Naive thymus-derived CD4-positive, alpha-beta T cell (primary cell): ENCODE measurements at regions of chrX and their contacts with region 1.

Region 1: DNA sequence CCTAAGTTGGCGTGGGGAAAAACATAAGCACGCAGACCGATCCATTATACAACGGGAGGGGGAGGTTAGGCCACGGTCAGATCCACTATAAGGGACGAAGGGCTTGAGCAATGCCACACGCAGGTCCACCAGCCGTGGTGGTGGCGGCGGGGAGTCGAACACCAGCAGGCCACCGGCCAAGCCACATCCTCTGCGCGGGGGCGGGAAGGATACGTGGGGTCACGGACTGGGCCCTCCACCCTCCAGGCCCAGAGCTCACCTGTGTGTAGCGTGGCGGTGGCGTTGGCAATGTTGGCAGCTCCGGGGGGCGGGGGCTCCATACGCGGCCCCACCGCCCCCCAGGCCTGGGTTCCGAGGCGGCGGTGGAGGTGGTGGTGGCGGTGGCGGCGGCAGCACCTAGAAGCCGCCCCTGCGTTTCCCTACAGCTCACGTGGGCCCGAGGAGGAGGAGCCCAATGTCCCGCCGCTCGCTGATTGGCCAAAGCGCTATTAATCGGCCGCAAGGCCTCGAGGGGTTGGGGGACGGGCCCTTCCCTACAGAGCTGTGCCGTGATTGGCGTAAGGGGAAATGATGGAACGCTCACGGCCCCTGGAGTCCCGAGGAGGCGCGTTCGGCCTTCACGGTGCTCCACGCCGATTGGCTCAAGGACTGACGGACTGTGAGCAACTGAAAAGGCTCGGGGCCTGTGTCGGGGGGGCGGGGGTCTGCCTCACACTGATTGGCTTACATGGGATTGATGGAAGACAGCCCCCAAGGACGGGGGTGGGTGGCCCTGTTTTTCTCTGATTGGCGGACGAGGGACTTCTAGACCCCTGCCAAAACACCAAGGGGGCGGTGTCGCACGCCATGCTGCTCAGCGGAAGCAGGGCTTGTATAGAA is at the start of gene ELK1:
- DNase-seq: peak; percentile 67 to 92 (median 88)
- ATAC-seq: peak; percentile 95
- H3K4me3 ChIP-seq: peak within 1 kb of the TSS; percentile 70
- H3K4me3 Mint-ChIP-seq: peak within 1 kb of the TSS; percentile 87 to 96 (median 90)
- H3K27ac ChIP-seq: peak within 1 kb of the TSS; percentile 85
- H3K27ac Mint-ChIP-seq: peak within 1 kb of the TSS; percentile 89 to 97 (median 95)
- H3K4me1 ChIP-seq: peaks cover 12 to 16% of the 10 kb centered on the region in 2 donors
- H3K4me1 Mint-ChIP-seq: peaks cover 35 to 52% (median 48%) of the 10 kb centered on the region in 7 donors
- H3K27me3 ChIP-seq: no peaks in the 10 kb centered on the region
- H3K27me3 Mint-ChIP-seq: no peaks in the 10 kb centered on the region
- total RNA-seq, gene ELK1: 29.3 to 62.4 (median 38.1) TPM

Region 2: DNA sequence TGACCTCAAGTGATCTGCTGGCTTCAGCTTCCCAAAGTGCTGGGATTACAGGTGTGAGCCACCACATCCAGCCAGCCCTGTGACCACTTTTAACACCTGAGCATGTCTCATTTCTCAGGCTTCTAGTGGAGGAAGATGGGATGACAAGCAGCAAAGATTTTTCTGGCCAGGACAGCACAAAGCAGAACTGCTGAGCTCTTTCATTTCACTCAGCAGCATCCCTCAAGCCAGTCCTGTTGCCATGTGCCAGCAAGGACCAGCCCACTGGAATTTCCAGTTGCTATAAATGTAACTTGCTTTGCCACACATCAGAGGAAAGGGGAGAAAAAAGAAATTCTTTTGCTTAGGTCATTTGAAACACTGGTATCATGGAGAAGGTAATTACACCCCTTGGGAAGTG is 967.4 kb before region 1 on chrX:
- CTCF ChIA-PET with region 1: no interaction called
- POLR2A ChIA-PET with region 1: no interaction called
- intact Hi-C with region 1: no loop called
- DNase-seq: no peak
- ATAC-seq: no peak
- H3K4me3 ChIP-seq: no peak overlapping the region
- H3K4me3 Mint-ChIP-seq: no peak overlapping the region
- H3K27ac ChIP-seq: no peak overlapping the region
- H3K27ac Mint-ChIP-seq: peak overlapping the region in 1 of 9 donors; percentile 7
- H3K4me1 ChIP-seq: no peaks in the 10 kb centered on the region
- H3K4me1 Mint-ChIP-seq: peaks cover 0 to 15% (median 0%) of the 10 kb centered on the region in 7 donors
- H3K27me3 ChIP-seq: no peaks in the 10 kb centered on the region
- H3K27me3 Mint-ChIP-seq: no peaks in the 10 kb centered on the region

Region 3: DNA sequence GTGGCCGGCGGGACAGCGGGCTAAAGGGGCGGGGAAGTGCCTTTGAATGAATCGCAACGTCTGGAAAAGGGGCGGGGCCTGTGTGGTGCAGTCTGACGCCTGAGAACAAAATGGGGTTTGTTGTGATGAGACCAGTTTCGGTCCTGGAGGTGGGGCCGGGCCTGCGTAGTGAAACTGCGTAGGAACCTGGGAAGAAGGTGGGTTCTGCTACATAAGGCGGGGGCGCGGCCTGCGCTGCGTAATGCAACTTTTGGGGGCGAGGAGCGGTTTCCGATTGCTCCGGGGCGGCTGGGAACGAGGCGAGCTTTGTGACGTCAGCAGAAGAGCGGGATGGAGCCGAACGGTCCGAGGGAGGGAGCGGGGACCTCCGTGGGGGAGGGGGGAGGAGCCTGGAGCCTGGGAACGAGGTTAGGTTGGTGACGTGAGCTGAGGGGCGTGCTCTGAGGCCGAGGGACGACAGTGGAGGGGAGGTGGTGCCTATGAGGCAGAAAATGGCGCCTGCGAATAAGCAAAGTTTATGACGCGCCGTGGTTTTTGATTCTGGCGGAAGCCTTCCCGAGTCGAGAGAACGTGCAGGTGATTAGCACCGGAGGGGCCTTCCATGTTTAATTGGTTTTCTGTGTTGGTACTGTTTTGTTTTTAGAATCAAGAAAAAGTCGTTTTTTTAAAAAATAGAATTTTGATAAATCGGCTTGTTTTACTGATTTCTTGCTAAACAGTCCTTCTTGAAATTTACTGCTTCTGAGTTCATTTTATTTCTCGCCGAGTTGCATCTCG is 416.9 kb before region 1 on chrX:
- CTCF ChIA-PET with region 1: no interaction called
- POLR2A ChIA-PET with region 1: no interaction called
- intact Hi-C with region 1: loop called (anchors 2 to 5 kb)
- DNase-seq: peak; percentile 71 to 97 (median 94)
- ATAC-seq: peak; percentile 92
- H3K4me3 ChIP-seq: peak overlapping the region; percentile 74
- H3K4me3 Mint-ChIP-seq: peak overlapping the region; percentile 84 to 98 (median 90)
- H3K27ac ChIP-seq: peak overlapping the region; percentile 99
- H3K27ac Mint-ChIP-seq: peak overlapping the region; percentile 94 to 100 (median 98)
- H3K4me1 ChIP-seq: peaks cover 0 to 14% of the 10 kb centered on the region in 2 donors
- H3K4me1 Mint-ChIP-seq: peaks cover 8 to 49% (median 24%) of the 10 kb centered on the region in 7 donors
- H3K27me3 ChIP-seq: no peaks in the 10 kb centered on the region
- H3K27me3 Mint-ChIP-seq: peaks cover 0 to 4% (median 0%) of the 10 kb centered on the region in 5 donors

Region 4: DNA sequence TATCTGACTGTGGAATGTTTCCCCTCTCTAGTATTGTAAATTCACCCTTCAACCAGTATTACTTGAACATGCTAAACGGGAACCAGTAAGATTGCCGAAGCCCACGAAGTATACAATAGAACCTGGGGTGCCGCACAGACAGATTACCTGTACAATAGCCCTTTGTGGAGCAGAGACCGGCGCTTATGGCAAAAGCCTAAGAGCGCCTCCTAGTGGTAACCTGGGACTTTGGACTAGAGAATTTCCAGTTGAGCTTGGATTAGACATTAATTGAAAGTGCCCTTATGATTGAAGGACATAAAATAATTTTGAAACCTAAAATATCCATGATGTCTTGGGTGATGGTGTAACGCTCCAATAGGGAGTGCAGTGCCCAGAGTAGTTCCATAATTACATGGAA is 265.9 kb before region 1 on chrX:
- CTCF ChIA-PET with region 1: no interaction called
- POLR2A ChIA-PET with region 1: no interaction called
- intact Hi-C with region 1: loop called in 1 of 2 experiments (anchors 5 kb)
- DNase-seq: peak; percentile 27 to 83 (median 67)
- ATAC-seq: peak; percentile 86
- H3K4me3 ChIP-seq: no peak overlapping the region
- H3K4me3 Mint-ChIP-seq: peak overlapping the region in 3 of 10 donors; percentile 31 to 39 (median 37)
- H3K27ac ChIP-seq: no peak overlapping the region
- H3K27ac Mint-ChIP-seq: peak overlapping the region in 3 of 9 donors; percentile 45 to 73 (median 67)
- H3K4me1 ChIP-seq: peaks cover 4 to 10% of the 10 kb centered on the region in 2 donors
- H3K4me1 Mint-ChIP-seq: peaks cover 11 to 39% (median 31%) of the 10 kb centered on the region in 7 donors
- H3K27me3 ChIP-seq: no peaks in the 10 kb centered on the region
- H3K27me3 Mint-ChIP-seq: no peaks in the 10 kb centered on the region

Region 5: DNA sequence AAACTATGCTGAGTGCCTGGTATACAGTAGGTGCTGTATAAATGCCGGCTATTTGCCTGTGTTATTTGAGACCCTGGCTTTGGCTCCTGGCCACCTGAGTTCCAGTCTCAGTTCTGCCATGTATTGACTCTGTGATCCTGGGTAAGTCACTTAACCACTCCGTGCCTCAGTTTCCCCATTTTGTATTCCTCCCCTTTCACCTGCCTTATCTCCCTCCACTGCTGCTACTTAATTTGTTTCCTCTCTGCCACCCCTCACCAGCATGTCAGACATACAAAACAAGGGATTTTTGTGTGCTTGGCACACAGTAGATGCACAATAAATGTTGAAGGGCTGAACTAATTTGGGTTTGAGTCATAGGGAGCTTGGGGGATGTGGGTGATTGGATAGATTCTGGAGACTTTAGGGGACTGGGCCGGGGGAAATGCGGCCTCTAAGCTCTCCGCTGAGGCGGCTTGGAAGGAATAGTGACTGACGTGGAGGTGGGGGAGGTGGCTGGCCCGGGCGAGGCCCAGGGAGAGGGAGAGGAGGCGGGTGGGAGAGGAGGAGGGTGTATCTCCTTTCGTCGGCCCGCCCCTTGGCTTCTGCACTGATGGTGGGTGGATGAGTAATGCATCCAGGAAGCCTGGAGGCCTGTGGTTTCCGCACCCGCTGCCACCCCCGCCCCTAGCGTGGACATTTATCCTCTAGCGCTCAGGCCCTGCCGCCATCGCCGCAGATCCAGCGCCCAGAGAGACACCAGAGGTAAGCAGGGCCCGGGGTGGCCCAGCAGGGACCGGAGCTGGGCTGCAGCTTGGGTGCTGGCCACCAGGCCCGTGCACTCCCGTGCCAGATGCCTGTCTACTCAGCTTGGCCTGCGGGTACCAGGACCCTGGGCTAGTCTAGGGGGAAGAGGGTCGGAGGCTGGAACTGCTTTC is 68.4 kb before region 1 on chrX and contains the start of gene TIMP1:
- CTCF ChIA-PET with region 1: no interaction called
- POLR2A ChIA-PET with region 1: no interaction called
- intact Hi-C with region 1: loop called in 1 of 2 experiments (anchors 2 kb)
- DNase-seq: peak in 8 of 9 donors; percentile 36 to 80 (median 46)
- ATAC-seq: peak; percentile 93
- H3K4me3 ChIP-seq: peak within 1 kb of the TSS; percentile 52
- H3K4me3 Mint-ChIP-seq: peak within 1 kb of the TSS; percentile 65 to 88 (median 76)
- H3K27ac ChIP-seq: peak within 1 kb of the TSS; percentile 58
- H3K27ac Mint-ChIP-seq: peak within 1 kb of the TSS; percentile 57 to 90 (median 82)
- H3K4me1 ChIP-seq: peaks cover 9 to 17% of the 10 kb centered on the region in 2 donors
- H3K4me1 Mint-ChIP-seq: peaks cover 15 to 40% (median 24%) of the 10 kb centered on the region in 7 donors
- H3K27me3 ChIP-seq: no peaks in the 10 kb centered on the region
- H3K27me3 Mint-ChIP-seq: no peaks in the 10 kb centered on the region
- total RNA-seq, gene TIMP1: 47.0 to 117 (median 85.2) TPM

Region 6: GRCh38 chrX:47628980-47629379 is 21.4 kb before region 1 on chrX:
- CTCF ChIA-PET with region 1: interaction called, 15 read pairs
- POLR2A ChIA-PET with region 1: interaction called, 8 read pairs
- intact Hi-C with region 1: loop called in 1 of 2 experiments (anchors 2 kb)
- DNase-seq: peak in 4 of 9 donors; percentile 14 to 35 (median 30)
- ATAC-seq: peak; percentile 33
- H3K4me3 ChIP-seq: peak overlapping the region; percentile 33
- H3K4me3 Mint-ChIP-seq: peak overlapping the region; percentile 83 to 95 (median 90)
- H3K27ac ChIP-seq: peak overlapping the region; percentile 64
- H3K27ac Mint-ChIP-seq: peak overlapping the region; percentile 72 to 95 (median 89)
- H3K4me1 ChIP-seq: peaks cover 0 to 3% of the 10 kb centered on the region in 2 donors
- H3K4me1 Mint-ChIP-seq: peaks cover 0 to 34% (median 28%) of the 10 kb centered on the region in 7 donors
- H3K27me3 ChIP-seq: no peaks in the 10 kb centered on the region
- H3K27me3 Mint-ChIP-seq: peaks cover 0 to 3% (median 0%) of the 10 kb centered on the region in 5 donors

Region 7: DNA sequence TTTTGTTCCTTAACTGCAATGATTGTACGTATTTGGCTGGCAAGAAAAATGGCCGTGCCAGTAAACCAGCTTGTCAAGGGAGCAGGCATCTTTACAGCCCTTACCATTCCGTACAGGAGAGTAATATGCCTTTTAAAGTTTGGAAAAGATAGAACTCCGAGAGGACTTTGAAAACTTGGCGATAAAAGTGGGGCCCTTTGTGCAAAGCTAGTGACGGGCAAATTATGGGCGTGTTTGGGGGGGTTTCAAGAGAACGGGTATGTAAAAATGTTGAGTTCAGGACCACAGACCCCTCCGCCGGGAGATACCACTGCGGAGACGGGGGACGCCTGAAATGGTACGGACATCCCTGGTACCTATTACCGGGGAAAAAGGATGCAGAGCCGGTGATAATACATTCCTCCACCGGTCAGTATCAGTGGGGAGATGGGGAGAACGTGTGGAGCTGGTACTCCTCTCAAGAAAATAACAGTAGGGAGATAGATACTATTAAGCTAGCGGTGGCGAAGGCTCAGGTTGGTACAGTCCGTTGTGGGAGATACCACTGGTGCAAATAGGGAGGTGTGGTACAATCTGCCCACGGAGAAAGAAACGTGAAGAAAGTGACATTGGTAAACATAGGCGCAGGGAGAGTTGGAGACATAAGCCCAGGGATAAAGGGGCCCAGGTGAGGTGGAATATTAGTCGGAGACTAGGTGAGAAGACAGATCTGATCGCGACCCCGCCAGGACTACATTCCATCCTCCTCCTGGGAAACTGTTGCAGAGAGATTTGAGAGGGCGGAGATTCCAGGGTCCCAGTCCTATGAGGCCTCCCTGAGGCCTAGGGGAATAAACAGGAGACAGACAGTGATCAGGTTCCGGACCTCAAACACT is 370.9 kb after region 1 on chrX:
- CTCF ChIA-PET with region 1: no interaction called
- POLR2A ChIA-PET with region 1: interaction called, 7 read pairs
- intact Hi-C with region 1: loop called (anchors 2 kb)
- DNase-seq: peak; percentile 57 to 90 (median 87)
- ATAC-seq: peak; percentile 77
- H3K4me3 ChIP-seq: peak overlapping the region; percentile 96
- H3K4me3 Mint-ChIP-seq: peak overlapping the region; percentile 91 to 97 (median 94)
- H3K27ac ChIP-seq: peak overlapping the region; percentile 87
- H3K27ac Mint-ChIP-seq: peak overlapping the region; percentile 93 to 99 (median 98)
- H3K4me1 ChIP-seq: no peaks in the 10 kb centered on the region
- H3K4me1 Mint-ChIP-seq: peaks cover 6 to 29% (median 10%) of the 10 kb centered on the region in 7 donors
- H3K27me3 ChIP-seq: no peaks in the 10 kb centered on the region
- H3K27me3 Mint-ChIP-seq: peaks cover 0 to 6% (median 0%) of the 10 kb centered on the region in 5 donors

Region 8: DNA sequence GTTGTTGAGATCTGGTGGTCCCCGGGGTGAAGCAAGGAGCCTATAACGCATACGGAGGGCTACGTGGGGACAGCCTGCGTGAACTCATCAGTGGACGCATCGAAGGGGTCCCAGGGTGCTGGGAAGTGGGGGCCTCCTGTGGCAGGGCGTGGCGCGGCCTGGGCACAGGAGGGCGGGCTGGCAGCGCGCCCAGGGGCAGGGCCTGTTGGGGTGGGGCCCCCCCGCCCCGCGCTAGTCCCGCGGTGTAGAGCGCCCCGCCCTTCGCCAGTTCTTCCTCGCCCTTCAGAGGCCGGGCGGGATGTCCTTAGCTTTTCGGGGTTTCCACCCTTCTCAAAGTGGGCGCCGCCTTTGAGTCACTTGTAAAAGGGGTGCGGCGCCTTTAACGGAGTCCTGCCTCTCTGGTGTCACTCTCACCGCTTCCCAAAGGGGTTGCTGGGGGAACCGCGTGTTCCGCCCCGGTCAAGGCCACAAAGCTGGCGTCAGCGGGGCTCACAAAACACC is 1521.9 kb after region 1 on chrX:
- CTCF ChIA-PET with region 1: no interaction called
- POLR2A ChIA-PET with region 1: no interaction called
- intact Hi-C with region 1: loop called in 1 of 2 experiments (anchors 10 kb)
- DNase-seq: peak in 8 of 9 donors; percentile 26 to 70 (median 33)
- ATAC-seq: peak; percentile 79
- H3K4me3 ChIP-seq: peak overlapping the region; percentile 63
- H3K4me3 Mint-ChIP-seq: peak overlapping the region; percentile 78 to 92 (median 87)
- H3K27ac ChIP-seq: peak overlapping the region; percentile 62
- H3K27ac Mint-ChIP-seq: peak overlapping the region; percentile 2 to 85 (median 82)
- H3K4me1 ChIP-seq: peaks cover 6 to 14% of the 10 kb centered on the region in 2 donors
- H3K4me1 Mint-ChIP-seq: peaks cover 9 to 36% (median 26%) of the 10 kb centered on the region in 7 donors
- H3K27me3 ChIP-seq: no peaks in the 10 kb centered on the region
- H3K27me3 Mint-ChIP-seq: no peaks in the 10 kb centered on the region

Region 9: GRCh38 chrX:49644991-49645637 is 1994.7 kb after region 1 on chrX:
- CTCF ChIA-PET with region 1: no interaction called
- POLR2A ChIA-PET with region 1: no interaction called
- intact Hi-C with region 1: no loop called
- DNase-seq: no peak
- ATAC-seq: no peak
- H3K4me3 ChIP-seq: no peak overlapping the region
- H3K4me3 Mint-ChIP-seq: no peak overlapping the region
- H3K27ac ChIP-seq: no peak overlapping the region
- H3K27ac Mint-ChIP-seq: no peak overlapping the region
- H3K4me1 ChIP-seq: no peaks in the 10 kb centered on the region
- H3K4me1 Mint-ChIP-seq: no peaks in the 10 kb centered on the region
- H3K27me3 ChIP-seq: no peaks in the 10 kb centered on the region
- H3K27me3 Mint-ChIP-seq: peaks cover 0 to 10% (median 0%) of the 10 kb centered on the region in 5 donors